IMR-90 (cell line): ENCODE measurements at regions of chr6 and their contacts with region 1.

Region 1: DNA sequence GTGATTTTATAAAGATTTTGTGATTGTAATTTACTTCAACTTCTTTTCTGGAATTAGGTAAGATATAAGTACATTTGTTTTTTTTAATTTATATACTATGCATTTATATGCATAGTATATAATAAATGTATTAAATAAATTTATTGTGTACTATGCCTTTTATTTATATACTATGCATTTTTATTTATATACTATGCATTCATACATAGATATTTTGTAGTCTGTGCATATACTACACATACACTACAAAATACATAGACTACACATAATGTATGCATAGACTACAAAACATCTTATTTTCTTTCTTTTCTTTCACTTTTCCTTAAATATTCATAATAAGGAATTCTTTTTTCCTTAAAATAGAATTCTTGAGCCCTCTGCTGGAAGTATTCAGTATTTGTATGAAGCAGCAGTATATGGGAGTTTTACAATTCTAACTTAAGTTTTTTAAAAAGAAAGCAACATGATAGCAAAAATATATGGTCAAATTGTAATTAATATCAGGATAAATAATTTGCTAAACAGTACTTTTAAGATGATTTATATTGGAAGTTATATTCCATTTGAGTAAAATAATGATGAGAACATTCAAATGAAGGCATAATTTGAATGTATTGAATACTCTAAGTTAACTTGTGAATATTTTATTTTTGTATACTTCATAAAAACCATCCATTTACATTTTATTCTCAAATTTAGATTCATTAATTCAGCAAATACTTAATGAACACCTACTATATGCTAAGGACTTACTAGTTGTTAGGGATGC is 129.3 kb downstream of the KLHL32 start:
- DNase-seq: peak; percentile 34
- ATAC-seq: peak; percentile 42; the same call in 1 of the 2 replicates
- H3K4me3 ChIP-seq: no peak overlapping the region
- H3K27ac ChIP-seq: no peak overlapping the region
- H3K4me1 ChIP-seq: no peaks in the 10 kb centered on the region
- H3K27me3 ChIP-seq: no peaks in the 10 kb centered on the region
- CTCF ChIP-seq: peak; percentile 66
- POLR2A ChIP-seq: no peak
- RAD21 ChIP-seq: peak; percentile 51

Region 2: DNA sequence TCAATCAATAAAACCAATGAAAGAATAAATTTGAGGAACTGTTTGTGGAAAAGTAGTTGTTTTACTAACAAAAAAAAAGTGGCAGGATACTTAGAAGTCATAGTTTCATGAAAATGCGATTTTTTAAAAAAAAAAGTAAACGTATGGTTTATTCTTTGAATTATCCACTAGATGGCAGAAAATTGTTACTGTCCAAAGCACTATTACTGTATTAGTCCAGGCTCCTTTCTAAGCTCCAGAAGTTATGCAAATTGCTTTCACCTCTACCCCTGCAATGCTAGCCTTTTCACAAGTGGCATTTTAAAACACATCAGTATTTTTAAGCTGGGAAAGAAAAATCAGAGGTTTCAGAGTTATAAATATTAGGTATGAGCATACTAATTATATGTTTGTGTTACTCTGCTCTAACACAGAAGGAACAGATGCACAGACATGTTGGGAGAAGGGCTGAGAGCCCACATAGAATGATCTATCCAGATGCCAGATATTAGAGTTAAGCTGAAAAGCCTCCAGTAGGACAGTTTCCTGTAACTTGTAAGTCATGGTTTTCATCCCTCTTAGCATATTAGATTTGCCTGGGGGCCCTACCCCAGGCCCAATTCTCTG is 427.0 kb before region 1 on chr6:
- CTCF ChIA-PET with region 1: interaction called, 4 read pairs
- POLR2A ChIA-PET with region 1: no interaction called
- dilution Hi-C with region 1: no loop called
- in situ Hi-C with region 1: loop called (anchors 5 kb)
- intact Hi-C with region 1: loop called (anchors 1 kb)
- DNase-seq: peak; percentile 38
- ATAC-seq: peak; percentile 85
- H3K4me3 ChIP-seq: no peak overlapping the region
- H3K27ac ChIP-seq: no peak overlapping the region
- H3K4me1 ChIP-seq: no peaks in the 10 kb centered on the region
- H3K27me3 ChIP-seq: no peaks in the 10 kb centered on the region
- CTCF ChIP-seq: peak; percentile 52
- POLR2A ChIP-seq: no peak
- RAD21 ChIP-seq: peak; percentile 53

Region 3: DNA sequence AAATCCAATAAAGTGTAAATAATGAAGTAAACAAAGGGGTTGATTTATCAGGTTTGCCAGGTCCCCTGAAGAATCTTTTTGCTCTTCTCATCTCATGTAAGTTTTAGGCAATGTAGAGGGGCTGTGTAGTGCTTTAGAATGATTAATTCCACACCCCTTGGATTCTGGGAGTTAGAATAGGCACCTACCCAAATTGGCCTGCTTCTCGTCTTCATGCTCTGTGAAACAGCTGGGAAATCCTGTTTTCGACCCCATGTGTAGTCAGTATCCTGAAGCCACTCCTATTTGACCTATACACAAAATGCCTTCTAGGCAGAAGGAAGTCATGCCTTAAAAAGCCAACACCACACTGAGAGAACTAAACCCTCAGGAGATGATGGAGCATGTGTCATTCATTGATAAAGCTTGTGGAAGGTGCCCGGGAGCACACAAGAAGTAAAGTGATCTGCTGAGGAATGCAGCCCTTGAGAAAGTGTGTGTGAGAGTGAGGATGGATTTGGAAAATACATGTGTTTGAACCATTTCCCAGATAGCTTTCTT is 41.6 kb after region 1 on chr6:
- CTCF ChIA-PET with region 1: no interaction called
- POLR2A ChIA-PET with region 1: no interaction called
- dilution Hi-C with region 1: no loop called
- in situ Hi-C with region 1: no loop called
- intact Hi-C with region 1: no loop called
- DNase-seq: no peak
- ATAC-seq: no peak
- H3K4me3 ChIP-seq: no peak overlapping the region
- H3K27ac ChIP-seq: no peak overlapping the region
- H3K4me1 ChIP-seq: no peaks in the 10 kb centered on the region
- H3K27me3 ChIP-seq: peaks cover 1% of the 10 kb centered on the region; the same call in 1 of the 2 replicates
- CTCF ChIP-seq: no peak
- POLR2A ChIP-seq: no peak
- RAD21 ChIP-seq: no peak

Region 4: GRCh38 chr6:97644353-97644752 is 590.5 kb after region 1 on chr6:
- CTCF ChIA-PET with region 1: no interaction called
- POLR2A ChIA-PET with region 1: no interaction called
- dilution Hi-C with region 1: no loop called
- in situ Hi-C with region 1: no loop called
- intact Hi-C with region 1: no loop called
- DNase-seq: no peak
- ATAC-seq: no peak
- H3K4me3 ChIP-seq: no peak overlapping the region
- H3K27ac ChIP-seq: no peak overlapping the region
- H3K4me1 ChIP-seq: no peaks in the 10 kb centered on the region
- H3K27me3 ChIP-seq: no peaks in the 10 kb centered on the region
- CTCF ChIP-seq: no peak
- POLR2A ChIP-seq: no peak
- RAD21 ChIP-seq: no peak